ENCODE measurements at regions of chr4 and their contacts with region 1.

Region 1: GRCh38 chr4:6362896-6363295 is 93.2 kb downstream of the WFS1 start:
- DNase-seq: peak; percentile 54
- H3K4me3 Mint-ChIP-seq: no peak overlapping the region
- H3K27ac Mint-ChIP-seq: no peak overlapping the region
- H3K4me1 Mint-ChIP-seq: no peaks in the 10 kb centered on the region
- H3K27me3 Mint-ChIP-seq: peaks cover under 1% of the 10 kb centered on the region

Region 2: DNA sequence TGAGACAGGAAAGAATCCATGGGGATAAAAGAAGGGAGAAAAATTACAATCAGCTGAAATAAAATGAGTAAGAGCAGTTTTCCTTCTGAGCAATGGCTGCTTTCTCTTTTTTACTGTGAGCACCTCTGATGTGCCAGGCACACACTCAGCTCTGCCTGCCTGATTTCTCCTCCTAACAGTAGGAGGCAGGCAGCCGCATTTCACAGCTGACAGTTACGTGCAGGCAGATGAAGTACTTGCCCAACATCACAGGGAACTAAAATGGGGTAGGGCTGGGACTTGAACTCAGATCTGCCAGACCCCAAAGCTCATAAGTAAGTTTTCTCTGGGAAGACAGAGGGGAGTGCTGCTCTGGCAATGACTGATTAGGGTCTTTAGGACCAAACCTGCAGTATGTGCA is 399.3 kb before region 1 on chr4:
- CTCF ChIA-PET with region 1: no interaction called
- intact Hi-C with region 1: no loop called
- DNase-seq: no peak
- H3K4me3 Mint-ChIP-seq: no peak overlapping the region
- H3K27ac Mint-ChIP-seq: no peak overlapping the region
- H3K4me1 Mint-ChIP-seq: no peaks in the 10 kb centered on the region
- H3K27me3 Mint-ChIP-seq: no peaks in the 10 kb centered on the region

Region 3: DNA sequence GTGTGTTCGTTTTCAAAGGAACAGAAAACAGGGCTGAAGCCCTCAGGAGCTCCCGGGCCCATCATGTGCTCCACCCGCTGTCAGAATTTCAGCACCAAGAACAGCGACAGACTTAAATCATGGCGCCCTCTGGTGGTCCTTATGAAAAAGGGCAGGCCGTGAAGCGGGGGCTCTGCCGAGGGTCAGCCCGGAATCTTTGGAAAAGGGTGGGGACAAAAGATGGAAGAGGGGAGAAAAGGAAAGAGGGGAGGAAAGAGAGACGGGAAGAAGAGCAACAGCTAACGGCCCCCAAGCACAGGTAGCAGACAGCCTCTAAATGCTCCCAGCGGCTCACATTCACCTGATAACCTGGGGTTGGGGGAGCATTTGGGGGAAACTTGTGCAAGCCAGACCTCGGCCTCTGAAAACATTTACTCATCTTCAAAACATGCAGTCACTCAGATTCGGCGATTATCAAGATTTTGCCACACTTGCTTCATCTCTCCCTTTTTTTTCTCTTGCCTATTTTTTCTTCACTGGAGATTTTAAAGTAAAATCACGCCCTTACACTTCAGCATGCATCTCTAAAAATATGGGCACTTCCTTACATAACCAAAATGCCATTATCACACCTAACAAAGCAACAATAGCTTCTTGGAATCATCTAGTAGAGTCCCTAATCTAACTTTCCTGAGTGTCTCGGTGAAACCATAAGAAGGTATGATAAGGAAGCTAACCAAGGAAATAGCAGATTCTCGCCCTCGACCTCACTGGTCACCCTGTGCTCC is 184.0 kb after region 1 on chr4:
- CTCF ChIA-PET with region 1: no interaction called
- intact Hi-C with region 1: loop called (anchors 2 kb)
- DNase-seq: peak; percentile 61
- H3K4me3 Mint-ChIP-seq: no peak overlapping the region
- H3K27ac Mint-ChIP-seq: no peak overlapping the region
- H3K4me1 Mint-ChIP-seq: no peaks in the 10 kb centered on the region
- H3K27me3 Mint-ChIP-seq: peaks cover 28% of the 10 kb centered on the region

Measured in activated naive CD4-positive, alpha-beta T cell treated with anti-CD3 and anti-CD28 coated beads for 36 hours (primary cell).